Activated B cell treated with CpG ODN at 0.5 μM for 24 hours (primary cell): ENCODE measurements at regions of chr6 and their contacts with region 1.

Region 1: DNA sequence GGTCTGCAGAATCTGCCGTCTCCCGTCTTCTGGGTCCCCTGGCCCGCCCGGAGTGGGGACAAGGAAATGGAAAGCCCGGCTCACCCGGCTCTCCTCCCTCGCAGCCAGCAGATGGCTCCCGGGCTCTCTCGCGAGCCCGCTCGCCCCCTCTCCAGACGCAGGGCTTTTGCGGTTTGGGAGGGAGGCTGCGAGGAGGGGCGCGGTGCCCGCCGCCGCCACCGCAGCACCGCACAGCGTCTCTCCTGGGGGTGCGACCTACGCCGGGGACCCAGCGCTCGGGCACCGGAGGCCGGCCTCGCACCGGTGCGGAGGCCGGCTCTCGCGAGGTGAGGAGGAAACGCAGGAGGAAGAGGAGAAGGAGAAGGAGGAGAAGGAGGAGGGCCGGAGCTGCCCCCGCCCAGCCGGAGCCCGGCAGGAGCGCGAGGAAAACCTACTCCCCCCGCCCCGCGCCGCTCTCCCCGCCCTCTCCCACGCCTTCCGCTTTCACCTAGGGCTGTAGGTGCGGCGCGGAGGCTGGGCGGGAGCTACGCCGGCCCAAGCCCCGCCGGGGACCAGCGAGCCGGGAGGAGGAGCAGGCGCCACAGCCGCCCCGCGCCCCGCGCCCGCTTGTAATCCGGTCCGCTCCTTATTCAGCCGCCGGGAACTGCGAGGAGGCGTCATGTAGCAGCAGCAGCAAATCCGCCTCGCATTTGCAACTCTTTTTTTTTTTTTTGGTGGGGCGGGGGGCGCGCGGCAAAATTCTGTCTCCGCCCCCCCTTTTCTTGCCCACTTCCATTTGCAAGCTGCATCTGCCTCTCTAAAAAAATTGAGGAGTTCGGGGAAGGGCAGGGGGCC is at the start of gene CARMIL1:
- DNase-seq: peak; percentile 62
- ATAC-seq: peak; percentile 82
- H3K4me3 Mint-ChIP-seq: peak within 1 kb of the TSS; percentile 87
- H3K27ac Mint-ChIP-seq: peak within 1 kb of the TSS; percentile 65
- H3K4me1 Mint-ChIP-seq: peaks cover 34% of the 10 kb centered on the region
- H3K27me3 Mint-ChIP-seq: no peaks in the 10 kb centered on the region
- CTCF ChIP-seq: no peak
- total RNA-seq, gene CARMIL1: 3.4 and 3.6 TPM in 2 replicates

Region 2: GRCh38 chr6:25302677-25303128 is 23.6 kb after region 1 on chr6:
- CTCF ChIA-PET with region 1: interaction called, 3 read pairs
- POLR2A ChIA-PET with region 1: interaction called, 9 read pairs
- intact Hi-C with region 1: loop called (anchors 1 kb)
- DNase-seq: no peak
- ATAC-seq: no peak
- H3K4me3 Mint-ChIP-seq: no peak overlapping the region
- H3K27ac Mint-ChIP-seq: no peak overlapping the region
- H3K4me1 Mint-ChIP-seq: peaks cover 55% of the 10 kb centered on the region
- H3K27me3 Mint-ChIP-seq: no peaks in the 10 kb centered on the region
- CTCF ChIP-seq: no peak

Region 3: DNA sequence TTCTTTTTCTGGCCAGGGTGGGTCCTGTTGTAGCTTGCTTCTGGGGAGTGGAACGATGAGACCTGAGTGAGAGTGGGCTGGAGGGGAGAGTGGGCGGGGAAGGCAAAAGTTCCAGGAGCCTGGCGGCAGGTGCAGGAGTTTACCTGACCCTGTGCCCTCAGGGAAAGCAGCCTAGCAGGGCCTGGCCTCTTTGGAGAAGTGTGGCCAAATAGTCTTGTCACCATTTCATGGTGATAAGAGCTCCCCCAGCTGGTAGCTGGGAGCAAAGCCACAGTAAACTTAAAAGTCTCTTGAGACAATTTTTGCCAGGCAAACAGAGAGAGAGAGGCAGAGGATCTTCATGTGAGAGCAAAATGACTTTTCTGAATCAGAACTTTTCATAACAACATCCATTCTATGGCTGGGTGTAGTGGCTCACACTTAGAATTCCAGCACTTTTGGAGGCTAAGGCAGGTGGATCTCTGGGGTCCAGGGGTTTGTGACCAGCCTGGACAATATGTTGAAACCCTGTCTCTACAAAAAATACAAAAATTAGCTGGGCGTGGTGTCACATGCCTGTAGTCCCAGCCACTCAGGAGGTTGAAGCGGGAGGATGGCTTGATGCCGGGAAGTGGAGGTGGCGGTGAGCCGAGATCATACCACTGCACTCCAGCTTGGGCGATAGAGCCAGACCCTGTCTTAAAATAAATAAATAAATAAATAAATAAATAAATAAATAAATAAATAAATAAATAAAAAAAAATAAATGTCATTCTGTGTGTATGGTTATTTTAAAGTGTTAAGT is 211.1 kb after region 1 on chr6:
- CTCF ChIA-PET with region 1: interaction called, 121 read pairs
- POLR2A ChIA-PET with region 1: interaction called, 15 read pairs
- intact Hi-C with region 1: loop called (anchors 1 kb)
- DNase-seq: peak; percentile 43
- ATAC-seq: peak; percentile 81
- H3K4me3 Mint-ChIP-seq: no peak overlapping the region
- H3K27ac Mint-ChIP-seq: no peak overlapping the region
- H3K4me1 Mint-ChIP-seq: peaks cover 8% of the 10 kb centered on the region
- H3K27me3 Mint-ChIP-seq: no peaks in the 10 kb centered on the region
- CTCF ChIP-seq: no peak

Region 4: GRCh38 chr6:25717866-25718740 is 439.0 kb after region 1 on chr6:
- CTCF ChIA-PET with region 1: no interaction called
- POLR2A ChIA-PET with region 1: no interaction called
- intact Hi-C with region 1: loop called (anchors 5 kb)
- DNase-seq: no peak
- ATAC-seq: no peak
- H3K4me3 Mint-ChIP-seq: no peak overlapping the region
- H3K27ac Mint-ChIP-seq: no peak overlapping the region
- H3K4me1 Mint-ChIP-seq: no peaks in the 10 kb centered on the region
- H3K27me3 Mint-ChIP-seq: peaks cover 15% of the 10 kb centered on the region
- CTCF ChIP-seq: no peak